Posterior vena cava (tissue), 2 donors: ENCODE measurements at regions of chr13 and their contacts with region 1.

Region 1: DNA sequence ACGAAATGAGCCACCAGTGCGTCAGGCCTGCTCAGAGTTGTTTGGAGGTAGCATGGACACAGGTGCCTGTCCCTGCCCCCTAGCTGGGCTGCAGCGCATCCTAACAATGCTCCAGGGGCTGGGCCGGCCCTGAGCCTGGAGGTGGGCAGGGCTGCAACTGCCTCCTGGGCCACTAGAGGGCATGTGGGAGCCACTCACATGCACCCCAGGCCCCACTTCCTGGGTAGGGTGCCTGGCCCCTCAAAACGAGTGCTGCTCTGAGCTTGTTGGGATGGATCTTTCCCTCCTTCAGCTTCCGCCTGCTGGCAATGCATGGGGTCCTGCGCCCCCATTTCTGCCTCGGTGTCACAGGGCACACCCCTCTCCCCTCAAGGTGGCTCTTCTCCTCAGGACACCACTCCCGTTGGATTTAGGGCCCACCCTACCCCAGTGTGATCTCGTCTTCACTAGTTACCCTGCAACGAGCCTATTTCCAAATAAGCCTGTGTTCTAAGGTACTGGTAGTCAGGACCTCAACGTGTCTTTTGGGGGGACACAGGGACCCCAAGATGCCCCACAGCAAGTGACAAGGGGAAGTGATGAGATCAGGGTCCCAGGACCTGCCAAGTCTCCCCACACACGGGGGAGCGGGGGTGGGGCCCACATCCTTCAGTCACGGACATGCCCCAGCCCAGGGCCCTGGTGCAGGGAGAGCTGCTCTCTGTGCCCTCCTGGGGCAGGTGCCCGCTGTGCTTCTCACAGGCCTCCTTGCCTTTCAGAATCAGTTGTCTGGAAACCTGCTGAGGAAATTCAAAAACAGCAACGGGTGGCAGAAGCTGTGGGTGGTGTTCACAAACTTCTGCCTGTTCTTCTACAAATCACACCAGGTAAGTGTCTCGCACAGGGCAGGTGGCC is 131.3 kb downstream of the STK24 start:
- DNase-seq: peak; percentile 90

Region 2: DNA sequence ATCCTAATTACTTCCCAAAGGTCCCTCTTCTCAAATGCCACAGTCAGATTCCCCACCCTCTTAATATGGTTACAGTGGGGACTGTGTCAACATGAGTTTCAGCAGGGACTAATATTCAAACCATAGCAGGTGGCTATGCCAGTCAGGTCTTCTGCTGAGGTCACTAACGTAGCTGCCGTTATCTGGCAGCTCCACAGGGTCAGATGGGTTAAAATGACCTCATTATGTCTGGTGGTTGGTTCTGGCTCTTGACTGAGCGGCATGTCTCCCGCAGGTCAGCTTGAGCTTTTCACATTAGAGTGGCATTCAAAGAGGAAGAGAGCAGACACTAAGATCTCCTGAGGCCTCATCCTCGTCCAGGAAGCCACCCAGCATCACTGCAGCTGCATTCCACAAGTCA is 513.6 kb before region 1 on chr13:
- intact Hi-C with region 1: no loop called
- DNase-seq: no peak

Region 3: DNA sequence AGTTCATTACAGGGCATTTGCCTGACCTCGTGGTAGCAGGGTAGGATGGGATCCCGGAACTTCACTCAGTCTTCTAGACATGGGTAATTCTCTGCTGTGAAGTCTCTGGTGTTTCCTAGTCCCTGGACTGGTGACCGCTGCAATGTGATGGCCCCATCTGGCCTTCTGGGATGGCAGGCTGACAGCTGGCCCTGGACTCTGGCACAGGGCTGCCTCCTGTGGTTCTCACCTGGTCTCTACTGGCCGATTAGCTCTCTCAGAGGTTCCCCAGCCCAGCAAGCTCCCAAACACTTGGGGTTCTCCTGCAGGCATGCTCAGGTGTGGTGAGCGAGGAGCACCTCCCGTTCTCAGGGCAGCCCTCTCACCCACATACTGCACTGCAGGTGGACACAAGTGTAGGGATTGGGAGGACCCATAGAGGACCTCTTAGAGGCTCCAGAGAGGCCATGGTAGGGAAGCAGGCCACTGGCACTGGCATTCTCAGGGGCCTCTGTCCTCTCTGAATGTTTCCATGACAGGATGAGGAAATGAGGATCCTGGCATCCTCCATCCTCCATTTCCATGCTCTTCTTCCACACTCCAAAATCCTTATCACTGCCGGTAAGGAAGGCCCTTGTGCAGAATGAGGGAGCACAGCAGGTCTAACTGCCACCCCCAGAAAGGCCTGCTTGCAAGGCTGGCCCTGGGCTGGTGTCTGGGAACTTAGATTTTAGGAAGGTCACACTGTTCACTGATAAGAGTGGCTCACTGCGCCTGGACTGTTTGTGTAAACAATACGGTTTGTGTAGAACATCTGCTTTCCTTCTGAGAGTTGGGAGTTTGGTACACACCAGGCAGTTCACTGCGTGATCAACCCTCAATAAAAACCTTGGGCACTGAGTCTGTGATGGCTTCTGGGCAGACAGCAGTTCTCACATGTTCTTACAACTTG is 334.2 kb before region 1 on chr13:
- intact Hi-C with region 1: loop called in 1 of 2 experiments (anchors 1 kb)
- DNase-seq: no peak

Region 4: DNA sequence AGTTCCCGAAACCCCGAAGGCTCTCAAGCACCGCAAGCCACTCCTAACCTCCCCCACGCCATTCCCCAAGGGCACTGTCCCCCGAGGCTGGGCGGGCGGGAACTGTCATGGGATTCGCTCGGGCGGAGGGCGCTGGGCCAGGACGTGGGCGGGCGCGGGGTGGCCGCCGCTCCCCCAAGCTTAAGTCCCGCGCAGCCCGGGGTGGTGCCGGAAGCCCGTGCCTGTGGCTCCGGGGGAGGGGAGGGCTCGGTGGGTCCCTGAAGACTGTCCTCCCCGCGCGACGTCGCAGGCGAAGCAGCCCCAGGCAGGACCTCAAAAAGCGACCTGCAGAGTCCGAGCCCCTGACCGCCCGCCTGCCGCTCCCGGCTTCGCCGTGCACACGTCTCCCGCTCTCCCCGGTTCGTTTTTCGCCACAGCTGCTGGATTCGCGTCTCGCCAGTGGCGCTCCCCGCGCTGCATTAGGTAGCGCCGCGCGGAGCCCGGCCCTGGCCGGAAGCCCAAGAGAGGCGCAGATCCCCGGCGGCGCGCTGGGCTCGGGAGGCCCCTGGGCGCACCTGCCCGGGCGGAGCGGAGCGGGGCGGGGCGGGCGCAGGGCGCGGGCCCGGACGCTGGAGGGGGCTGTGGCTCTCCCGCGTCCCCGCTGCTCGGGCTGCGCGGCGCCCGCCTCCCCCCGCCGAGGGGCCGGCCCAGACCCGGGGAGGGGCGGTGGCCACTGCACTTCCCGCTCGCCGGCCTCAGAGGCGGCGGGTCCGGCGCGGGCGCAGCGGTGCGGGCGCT is 303.0 kb before region 1 on chr13 and contains the start of gene FARP1:
- intact Hi-C with region 1: loop called in 1 of 2 experiments (anchors 10 kb)
- DNase-seq: peak; percentile 93
- total RNA-seq, gene FARP1: 61.4 to 89.2 TPM

Region 5: DNA sequence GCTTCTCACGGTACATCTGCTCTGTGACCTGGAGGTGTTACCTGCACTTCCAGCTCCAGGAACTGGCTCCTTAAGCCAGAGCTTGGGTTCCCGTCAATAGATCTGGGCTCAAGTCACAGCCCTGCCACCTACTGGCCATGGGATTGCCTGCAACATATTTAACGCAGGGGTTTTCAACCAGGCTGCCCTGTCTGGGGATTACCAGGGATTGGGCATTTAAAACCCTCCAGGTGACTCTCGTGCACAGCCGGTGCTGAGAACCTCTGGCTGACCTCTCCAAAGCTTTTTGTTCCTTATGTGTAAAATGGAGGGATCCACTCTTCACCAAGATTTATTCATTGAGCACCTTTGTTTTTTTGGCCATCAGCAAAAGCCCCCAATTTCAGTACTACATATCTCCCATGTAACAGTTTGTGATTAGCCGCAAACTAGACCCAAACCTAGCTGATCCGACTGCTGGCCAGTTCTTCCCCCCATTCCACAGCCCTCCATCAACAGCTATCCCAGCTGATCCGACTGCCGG is 207.9 kb after region 1 on chr13:
- intact Hi-C with region 1: loop called (anchors 5 kb)
- DNase-seq: peak; percentile 87

Region 6: GRCh38 chr13:98672944-98673545 is 227.5 kb after region 1 on chr13:
- intact Hi-C with region 1: loop called (anchors 1 to 5 kb)
- DNase-seq: no peak

Region 7: DNA sequence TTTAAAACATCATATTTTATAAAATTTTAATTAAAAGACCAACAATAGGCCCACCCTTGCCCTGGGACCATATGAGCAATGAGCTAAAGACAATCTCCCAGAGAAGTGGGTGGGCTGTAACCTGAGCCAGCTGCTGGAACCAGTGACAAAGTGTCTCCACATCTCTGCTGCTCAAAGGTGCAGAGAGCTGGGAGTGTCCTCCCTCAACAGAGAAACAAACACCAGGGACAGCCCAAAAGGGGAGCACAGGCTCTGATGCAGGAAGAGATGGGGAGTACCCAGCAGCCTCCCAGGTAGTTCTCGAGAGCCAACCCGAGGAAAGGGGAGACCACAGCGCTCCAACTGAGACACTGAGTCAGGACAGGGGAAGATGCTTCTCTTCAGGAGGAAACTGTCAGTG is 493.2 kb after region 1 on chr13:
- intact Hi-C with region 1: no loop called
- DNase-seq: no peak